AG04450 (cell line): ENCODE measurements at regions of chr11 and their contacts with region 1.

Region 1: DNA sequence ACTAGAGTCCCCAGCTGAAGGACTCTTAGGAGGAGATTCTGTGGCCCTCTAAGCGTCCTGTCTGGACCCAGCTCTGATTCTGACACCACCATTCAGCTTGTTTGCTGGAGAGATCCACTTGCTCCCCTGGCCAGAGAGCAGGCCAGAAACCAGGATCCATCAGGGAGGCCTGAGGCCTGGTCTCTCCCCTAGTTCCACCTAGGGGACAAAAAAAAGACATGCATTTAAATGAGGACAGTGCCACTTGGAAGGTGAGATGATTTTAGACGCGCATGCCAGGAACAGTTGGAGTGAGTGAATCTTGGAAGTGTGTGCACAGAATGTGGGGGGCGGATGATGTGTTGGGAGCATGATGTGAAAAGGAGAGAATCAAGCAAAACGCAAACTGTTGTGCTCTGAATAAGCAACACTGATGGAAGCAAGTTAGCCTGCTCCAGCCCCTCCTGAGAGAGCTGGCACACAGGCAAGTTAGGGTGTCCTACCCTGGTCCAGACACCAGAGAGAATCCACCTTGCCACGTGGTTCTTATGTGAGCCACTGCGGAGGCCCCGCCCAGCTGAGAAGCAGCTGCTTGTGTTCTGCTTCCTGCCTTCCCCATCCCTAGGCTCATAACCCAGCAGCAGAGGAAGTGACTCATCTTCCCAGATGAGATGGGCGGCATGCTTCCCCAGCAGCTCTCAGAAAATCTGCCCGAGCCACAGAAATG is 8.0 kb upstream of the SLCO2B1 start:
- DNase-seq: peak; percentile 84
- H3K4me3 ChIP-seq: no peak overlapping the region
- H3K27ac ChIP-seq: peak overlapping the region; percentile 52
- H3K27me3 ChIP-seq: peaks cover 24% of the 10 kb centered on the region
- CTCF ChIP-seq: no peak

Region 2: DNA sequence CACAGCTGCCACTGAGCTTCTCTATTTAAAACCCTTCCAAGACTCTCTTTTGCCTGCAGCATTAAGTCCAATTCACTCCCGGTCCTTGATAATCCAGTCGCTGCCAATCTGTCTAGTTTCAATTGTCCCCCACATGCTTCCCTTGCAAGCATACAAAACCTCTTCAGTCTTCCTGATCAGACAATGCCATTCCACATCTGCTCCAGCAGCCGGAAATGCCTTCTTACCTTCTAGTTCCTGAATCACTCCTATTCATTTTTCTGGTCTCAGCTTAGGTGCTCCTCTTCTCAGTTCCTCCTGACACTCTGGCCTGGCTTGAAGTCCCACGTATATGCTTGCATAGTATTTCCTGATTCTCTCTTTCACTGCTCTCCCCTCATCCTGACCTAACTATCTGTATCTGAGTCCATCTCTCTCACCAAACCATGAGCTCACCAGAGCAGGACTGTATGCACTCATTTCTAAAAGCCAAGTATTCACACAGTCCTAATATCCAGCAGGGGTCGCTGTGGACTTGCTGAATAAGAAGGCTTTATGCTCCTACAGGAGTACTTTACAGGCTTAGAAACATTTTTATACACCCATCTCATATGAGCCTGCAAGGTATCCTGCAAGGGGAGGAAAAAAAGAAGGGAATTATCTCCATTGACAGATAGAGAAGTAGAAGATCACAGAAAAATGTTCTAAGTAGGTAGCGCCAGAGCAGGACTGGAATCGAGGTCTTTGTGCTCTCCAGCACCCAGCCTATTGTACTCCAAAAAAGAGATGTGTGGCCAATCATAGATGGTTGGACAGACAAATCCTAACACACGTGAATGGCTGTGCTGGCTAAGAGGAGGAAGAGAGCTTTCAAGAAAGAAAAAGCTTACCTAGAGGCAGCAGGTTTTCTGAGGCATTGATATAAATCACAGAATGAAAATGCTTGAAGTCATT is 213.2 kb before region 1 on chr11:
- CTCF ChIA-PET with region 1: interaction called, 27 read pairs
- POLR2A ChIA-PET with region 1: no interaction called
- DNase-seq: peak; percentile 87
- H3K4me3 ChIP-seq: no peak overlapping the region
- H3K27ac ChIP-seq: no peak overlapping the region
- H3K27me3 ChIP-seq: no peaks in the 10 kb centered on the region
- CTCF ChIP-seq: peak; percentile 91

Region 3: DNA sequence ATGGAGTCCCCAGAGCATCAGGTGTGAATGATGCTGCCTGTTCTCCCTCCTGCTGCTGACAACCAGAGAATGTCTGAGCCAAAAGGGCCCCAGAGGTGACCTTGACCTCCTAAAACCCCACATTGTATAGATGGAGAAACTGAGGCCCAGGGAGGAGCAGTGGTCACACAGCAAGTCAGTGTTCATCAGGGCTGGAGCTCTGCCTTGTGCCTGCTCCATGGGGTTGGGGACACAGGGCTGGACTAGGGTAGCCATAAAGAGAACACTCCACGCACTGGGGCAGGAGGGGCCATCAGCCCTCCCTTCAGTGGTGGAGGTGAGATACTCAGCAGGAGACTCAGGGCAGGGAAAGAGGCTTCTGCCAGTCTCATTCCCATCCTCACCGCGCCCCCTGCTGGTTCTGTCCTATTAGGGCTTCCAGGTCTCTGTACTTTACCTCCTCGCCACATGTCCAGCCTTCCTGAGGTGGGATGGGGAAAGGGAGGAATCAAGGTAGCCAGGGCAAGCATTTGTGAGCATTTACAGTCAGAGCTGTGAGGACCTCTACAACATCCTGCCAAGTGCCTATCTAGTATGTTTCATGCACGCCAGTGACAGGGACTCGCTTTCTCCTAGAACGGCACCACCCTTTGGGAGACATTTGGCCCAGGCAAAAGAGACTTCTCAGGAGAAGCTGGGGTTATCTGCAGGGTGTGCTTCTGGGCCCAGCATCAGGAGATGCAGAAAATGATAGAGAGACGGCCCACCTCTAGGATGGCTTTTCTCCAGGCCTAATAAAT is 110.9 kb before region 1 on chr11:
- CTCF ChIA-PET with region 1: interaction called, 10 read pairs
- POLR2A ChIA-PET with region 1: no interaction called
- DNase-seq: peak; percentile 49
- H3K4me3 ChIP-seq: no peak overlapping the region
- H3K27ac ChIP-seq: peak overlapping the region; percentile 82
- H3K27me3 ChIP-seq: no peaks in the 10 kb centered on the region
- CTCF ChIP-seq: peak; percentile 88

Region 4: DNA sequence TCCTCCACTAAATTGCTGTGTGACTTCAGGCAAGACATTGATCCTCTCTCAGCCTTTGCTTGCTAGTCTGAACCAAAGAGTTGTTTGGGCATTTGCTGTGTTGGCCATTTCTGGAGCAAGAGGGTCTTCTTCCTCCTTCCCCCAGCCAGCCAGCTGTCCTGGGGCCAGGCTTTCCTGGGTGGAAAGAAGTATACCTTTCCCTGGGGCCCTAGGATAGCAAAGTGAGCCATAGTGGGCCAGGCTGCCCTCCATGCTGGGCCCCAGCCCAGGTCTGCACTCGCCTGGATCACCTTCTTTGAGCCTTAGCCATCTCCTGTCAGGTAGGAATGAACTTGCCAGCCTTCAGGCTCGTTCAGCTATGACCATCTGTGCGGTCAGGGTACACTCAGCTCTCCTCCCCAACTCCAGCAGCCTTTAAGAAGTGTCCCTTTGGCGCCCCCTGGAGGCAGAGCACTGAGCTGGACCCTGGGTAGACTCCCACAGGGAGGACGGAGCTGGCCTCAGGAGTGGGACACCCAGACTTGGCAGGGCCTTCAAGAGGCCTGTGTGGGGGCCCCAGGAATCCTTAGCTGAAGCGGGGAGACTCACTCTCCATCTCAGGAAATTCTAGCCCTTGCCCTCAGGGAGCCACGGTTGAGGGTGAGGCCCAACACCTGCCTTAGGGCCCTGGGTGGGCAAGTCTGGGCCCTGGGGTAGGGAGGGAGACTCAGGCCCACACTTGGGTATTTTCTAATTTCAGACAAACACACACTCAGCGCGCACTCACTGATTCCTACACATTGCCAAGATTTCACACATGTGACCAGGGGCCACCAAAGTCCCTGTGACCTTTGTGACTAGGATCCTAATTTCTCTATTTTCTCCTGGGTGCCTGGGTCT is 62.1 kb after region 1 on chr11:
- CTCF ChIA-PET with region 1: interaction called, 216 read pairs
- POLR2A ChIA-PET with region 1: no interaction called
- DNase-seq: peak; percentile 53
- H3K4me3 ChIP-seq: no peak overlapping the region
- H3K27ac ChIP-seq: no peak overlapping the region
- H3K27me3 ChIP-seq: peaks cover 41% of the 10 kb centered on the region
- CTCF ChIP-seq: peak; percentile 95

Region 5: GRCh38 chr11:75248690-75249268 is 105.9 kb after region 1 on chr11:
- CTCF ChIA-PET with region 1: interaction called, 164 read pairs
- POLR2A ChIA-PET with region 1: interaction called, 3 read pairs
- DNase-seq: peak; percentile 66
- H3K4me3 ChIP-seq: no peak overlapping the region
- H3K27ac ChIP-seq: no peak overlapping the region
- H3K27me3 ChIP-seq: peaks cover 38% of the 10 kb centered on the region
- CTCF ChIP-seq: peak; percentile 100